Mucosa of descending colon (tissue), 3 donors: ENCODE measurements at regions of chr2 and their contacts with region 1.

Region 1: GRCh38 chr2:135913727-135914365 is 37.6 kb upstream of the MCM6 start:
- DNase-seq: peak in 1 of 3 donors; percentile 72
- ATAC-seq: peak; percentile 47
- H3K4me3 ChIP-seq: no peak overlapping the region
- H3K4me1 ChIP-seq: no peaks in the 10 kb centered on the region
- CTCF ChIP-seq: peak; percentile 37

Region 2: DNA sequence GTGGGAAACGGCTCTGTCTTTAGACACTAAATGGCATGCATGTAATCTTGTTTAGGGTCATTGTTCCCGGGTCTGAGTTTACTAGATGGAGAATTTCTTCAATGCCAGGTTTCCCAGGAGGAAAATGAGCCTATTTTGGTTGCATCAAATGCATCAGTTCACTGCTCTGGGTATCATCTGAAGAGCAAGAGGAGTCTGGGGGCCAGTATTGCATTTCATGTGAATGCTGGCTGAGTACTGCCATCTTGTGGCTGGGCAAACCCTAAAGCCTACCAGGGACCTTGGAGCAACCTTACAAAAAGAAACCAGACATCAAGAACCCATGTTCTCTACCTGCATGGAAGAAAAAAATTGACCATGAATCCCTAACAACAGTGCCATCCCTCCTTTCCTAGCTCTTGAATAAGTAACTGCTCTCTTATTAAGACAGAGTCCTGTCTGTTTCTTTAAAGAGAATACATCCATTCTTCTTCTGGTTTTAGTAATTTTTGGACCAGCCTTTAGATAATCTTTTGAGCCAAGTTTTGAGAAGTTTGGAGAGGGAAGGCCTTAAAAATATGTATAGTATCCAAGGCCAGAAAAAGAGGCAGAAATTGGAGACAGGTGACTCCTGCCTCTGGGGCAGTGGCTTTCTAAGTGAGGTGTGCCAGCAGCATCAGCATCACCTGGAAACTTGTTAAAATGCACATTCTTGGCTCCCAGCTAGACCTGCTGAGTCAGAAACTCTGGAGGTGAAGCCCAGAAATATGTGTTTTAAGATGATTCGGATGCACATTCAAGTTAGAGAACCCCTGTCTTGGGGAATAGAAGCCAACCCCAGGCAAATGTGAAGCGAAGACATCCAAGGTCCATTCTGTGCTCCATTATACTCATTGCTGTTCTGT is 465.1 kb after region 1 on chr2:
- intact Hi-C with region 1: loop called (anchors 2 to 10 kb)
- DNase-seq: peak in 2 of 3 donors; percentile 46 to 76
- ATAC-seq: peak; percentile 73
- H3K4me3 ChIP-seq: no peak overlapping the region
- H3K4me1 ChIP-seq: no peaks in the 10 kb centered on the region
- CTCF ChIP-seq: peak; percentile 22

Region 3: DNA sequence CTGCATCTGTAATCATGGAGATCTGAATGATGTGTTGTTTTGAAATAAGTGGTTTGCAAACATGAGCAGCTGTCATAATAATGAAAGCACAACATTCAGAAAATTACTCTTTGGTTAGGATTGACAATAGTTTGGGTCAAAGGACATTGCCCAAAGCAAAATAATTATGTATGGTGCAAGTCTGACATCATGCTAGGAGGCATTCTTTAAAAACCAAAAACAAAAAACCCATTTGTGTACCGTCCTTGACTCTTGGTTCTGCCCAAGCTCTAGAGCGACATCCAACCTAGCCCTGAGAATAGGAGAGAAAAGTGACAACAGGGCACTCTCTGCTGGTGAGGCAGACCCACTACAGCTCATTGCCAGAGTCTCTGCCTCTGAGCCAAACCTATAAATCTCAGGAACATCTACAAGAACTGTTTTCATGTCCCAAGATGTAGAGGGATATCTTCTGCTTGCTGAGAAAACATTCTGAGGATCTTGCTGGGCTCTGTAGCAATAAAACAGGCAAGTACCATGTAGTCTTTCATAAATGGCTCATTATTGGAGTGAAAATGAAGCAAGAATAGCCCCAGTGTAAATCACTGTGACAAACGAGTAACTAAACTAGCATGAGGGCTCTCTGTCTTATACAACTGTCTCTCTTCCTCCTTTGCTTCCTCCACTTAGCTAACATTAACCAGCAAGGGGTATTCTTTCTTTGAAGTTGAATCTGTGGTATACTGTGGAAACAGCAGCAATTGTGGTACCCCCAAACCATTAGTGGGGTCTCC is 470.9 kb after region 1 on chr2:
- intact Hi-C with region 1: loop called (anchors 2 to 10 kb)
- DNase-seq: peak in 1 of 3 donors; percentile 36
- ATAC-seq: peak; percentile 73
- H3K4me3 ChIP-seq: no peak overlapping the region
- H3K4me1 ChIP-seq: no peaks in the 10 kb centered on the region
- CTCF ChIP-seq: no peak